Mucosa of descending colon (tissue), 3 donors: ENCODE measurements at regions of chr5 and their contacts with region 1.

Region 1: DNA sequence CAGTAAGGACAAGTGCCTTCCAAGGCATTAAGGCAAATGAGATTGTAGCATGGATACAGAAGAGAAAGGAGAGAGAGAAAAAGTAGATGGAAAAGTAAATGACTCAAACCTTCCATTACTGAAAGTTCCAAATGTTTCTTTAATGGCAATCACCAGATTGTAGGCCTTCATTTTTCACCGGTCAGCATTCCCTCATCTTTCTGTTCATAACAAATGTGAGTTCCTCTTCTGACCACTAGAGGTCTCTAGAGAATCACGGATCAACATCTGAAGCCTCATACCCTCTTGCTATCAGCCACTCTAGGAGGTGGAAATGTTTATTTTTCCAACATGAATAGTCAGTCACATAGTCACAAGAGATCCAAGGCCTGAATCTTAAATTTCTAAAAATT is 73.6 kb upstream of the RPS23 start:
- DNase-seq: peak in 1 of 3 donors; percentile 36
- ATAC-seq: peak; percentile 85
- H3K4me3 ChIP-seq: no peak overlapping the region
- H3K4me1 ChIP-seq: no peaks in the 10 kb centered on the region
- CTCF ChIP-seq: peak; percentile 69

Region 2: GRCh38 chr5:82234883-82235282 is 116.9 kb before region 1 on chr5:
- intact Hi-C with region 1: no loop called
- DNase-seq: peak in 2 of 3 donors; percentile 27 to 41
- ATAC-seq: peak; percentile 88
- H3K4me3 ChIP-seq: no peak overlapping the region
- H3K4me1 ChIP-seq: no peaks in the 10 kb centered on the region
- CTCF ChIP-seq: no peak

Region 3: GRCh38 chr5:82244854-82245635 is 106.7 kb before region 1 on chr5:
- intact Hi-C with region 1: no loop called
- DNase-seq: no peak
- ATAC-seq: no peak
- H3K4me3 ChIP-seq: no peak overlapping the region
- H3K4me1 ChIP-seq: no peaks in the 10 kb centered on the region
- CTCF ChIP-seq: no peak

Region 4: GRCh38 chr5:82512025-82512424 is 160.3 kb after region 1 on chr5:
- intact Hi-C with region 1: no loop called
- DNase-seq: no peak
- ATAC-seq: no peak
- H3K4me3 ChIP-seq: no peak overlapping the region
- H3K4me1 ChIP-seq: no peaks in the 10 kb centered on the region
- CTCF ChIP-seq: no peak

Region 5: GRCh38 chr5:83430130-83431010 is 1078.6 kb after region 1 on chr5:
- intact Hi-C with region 1: loop called in 1 of 2 experiments (anchors 2 kb)
- DNase-seq: peak in 2 of 3 donors; percentile 30 to 74
- ATAC-seq: peak; percentile 87
- H3K4me3 ChIP-seq: no peak overlapping the region
- H3K4me1 ChIP-seq: no peaks in the 10 kb centered on the region
- CTCF ChIP-seq: peak; percentile 63

Region 6: DNA sequence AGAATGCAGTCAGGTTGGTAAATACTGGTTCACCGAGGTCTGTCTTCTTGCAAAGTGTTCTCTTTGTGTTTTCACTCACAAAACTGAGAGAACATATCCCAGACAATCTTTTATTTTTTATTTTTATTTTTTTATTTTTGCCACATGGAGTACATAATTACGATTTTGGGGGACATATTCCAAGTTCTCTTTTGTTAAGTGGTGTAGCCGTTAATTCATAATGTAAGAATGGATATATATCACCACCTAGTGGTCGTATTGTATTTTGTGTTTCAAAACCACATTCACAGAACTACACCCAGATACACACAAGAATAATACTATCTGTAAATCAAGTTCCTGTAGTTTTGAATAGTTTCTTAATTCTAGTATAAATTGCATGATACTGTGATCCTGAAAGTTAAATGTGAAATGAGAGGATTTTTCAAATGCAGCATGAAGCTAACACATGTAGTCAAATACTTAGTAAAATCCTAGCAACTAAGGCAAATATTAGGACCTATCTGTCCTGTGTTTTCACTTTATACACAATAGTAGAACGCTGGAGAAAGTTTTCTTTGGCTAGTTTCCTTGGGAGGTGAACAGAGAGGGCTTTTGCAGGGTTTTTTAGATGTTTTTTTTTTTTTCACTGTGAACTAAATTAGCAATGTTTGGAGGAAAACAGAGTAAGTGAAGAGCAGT is 1212.5 kb after region 1 on chr5:
- intact Hi-C with region 1: loop called (anchors 5 to 10 kb)
- DNase-seq: no peak
- ATAC-seq: peak; percentile 49
- H3K4me3 ChIP-seq: no peak overlapping the region
- H3K4me1 ChIP-seq: no peaks in the 10 kb centered on the region
- CTCF ChIP-seq: no peak